GM23248 (cell line): ENCODE measurements at regions of chr1 and their contacts with region 1.

Region 1: DNA sequence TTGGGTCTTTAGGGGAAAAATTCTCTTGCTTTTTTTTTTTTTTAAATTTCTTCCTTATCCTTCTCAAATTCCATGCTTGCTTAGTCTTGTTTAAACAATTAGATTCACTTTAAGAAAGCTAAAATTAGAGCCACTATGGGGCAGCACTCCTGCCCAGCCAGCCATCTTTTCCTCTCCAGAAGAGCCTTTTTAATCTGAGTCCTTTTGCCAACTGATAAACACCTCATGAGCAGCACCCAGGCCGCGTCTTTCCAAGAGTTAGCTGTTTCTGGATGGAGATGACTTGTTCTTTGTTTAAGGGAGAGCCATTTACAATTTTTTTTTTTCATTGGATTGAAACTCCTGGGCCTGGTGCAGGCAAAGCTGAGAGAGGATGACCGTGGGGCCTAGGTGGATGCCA is 53.3 kb upstream of the TSPAN2 start:
- DNase-seq: no peak
- H3K4me3 ChIP-seq: no peak overlapping the region
- H3K27ac ChIP-seq: no peak overlapping the region
- H3K4me1 ChIP-seq: peaks cover 10% of the 10 kb centered on the region
- H3K27me3 ChIP-seq: no peaks in the 10 kb centered on the region

Region 2: DNA sequence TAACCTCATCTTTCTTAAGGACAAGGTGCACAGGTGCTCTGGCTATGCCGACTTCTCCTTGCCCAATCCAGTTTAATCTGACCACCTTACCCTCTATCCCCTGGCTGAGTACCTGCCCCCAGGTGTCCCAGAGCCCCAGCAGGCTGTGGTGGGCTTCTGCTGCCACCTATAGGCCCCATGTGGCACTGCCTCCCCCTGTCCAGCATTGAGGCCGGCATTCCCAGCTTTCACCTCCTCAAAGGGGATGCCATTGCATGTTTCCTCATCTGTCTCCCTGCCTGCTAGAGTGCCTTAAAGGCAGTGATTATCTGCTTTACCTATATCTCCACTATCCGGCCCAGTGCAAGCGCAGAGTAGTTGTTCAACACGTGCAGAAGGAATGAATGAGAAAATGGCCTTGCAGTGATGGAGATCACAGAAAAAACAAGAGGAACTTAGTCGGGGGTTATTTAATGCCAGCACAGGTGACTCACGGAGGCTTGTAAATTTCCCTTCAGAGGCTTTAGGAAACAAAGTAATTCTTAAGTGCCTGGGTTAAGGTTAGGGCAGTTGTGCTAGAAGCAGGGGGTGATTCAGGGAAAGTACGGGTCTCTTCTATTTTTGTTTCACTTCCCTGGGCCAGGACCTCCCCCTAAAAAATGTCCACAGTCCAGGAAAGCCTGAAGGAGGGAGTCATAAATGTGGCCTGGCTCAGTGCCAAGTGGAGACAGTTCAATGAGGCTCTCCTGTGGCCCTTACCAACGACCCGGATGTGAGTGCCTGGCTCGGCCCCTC is 327.3 kb after region 1 on chr1:
- in situ Hi-C with region 1: loop called (anchors 10 kb)
- DNase-seq: peak; percentile 65
- H3K4me3 ChIP-seq: no peak overlapping the region
- H3K27ac ChIP-seq: no peak overlapping the region
- H3K4me1 ChIP-seq: peaks cover 8% of the 10 kb centered on the region; the same call in 1 of the 2 replicates
- H3K27me3 ChIP-seq: no peaks in the 10 kb centered on the region

Region 3: DNA sequence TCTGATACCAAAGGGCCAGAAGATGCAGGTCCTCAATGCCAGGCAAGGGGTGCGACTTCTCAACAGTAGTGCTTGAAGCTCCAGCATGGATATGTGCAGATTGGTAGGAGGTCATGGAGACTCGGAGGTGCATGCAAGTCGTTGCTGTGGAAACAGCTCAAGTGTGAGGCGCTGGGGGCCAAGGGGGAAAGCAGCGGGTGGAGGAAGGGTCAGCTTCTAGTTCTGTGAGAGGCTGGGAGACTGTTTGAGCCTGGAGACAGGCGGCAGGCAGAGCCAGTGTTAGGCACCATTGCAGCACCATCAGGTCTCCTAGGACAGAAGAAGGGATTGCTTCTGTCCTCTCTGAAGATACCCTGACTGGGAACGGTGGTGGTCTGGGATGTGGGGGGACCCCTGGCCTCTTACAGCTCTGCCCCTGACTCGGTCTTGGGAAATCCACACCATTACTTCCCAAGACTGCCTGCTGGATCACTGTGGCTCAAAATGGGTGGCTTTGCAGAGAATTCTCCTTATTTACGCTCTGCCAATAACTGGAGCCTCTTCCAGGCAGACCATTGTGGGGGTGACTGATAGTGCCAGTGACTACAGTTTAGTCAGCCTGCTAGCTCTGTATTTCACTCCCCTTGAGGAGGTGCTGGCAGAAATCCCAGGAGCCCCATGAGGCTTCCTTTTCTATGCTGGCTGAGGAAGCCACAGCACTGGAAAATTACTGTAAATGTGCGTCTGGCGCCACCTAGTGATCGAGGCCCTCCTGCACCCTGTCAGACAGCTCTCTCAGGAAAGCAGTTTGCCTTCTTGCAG is 452.9 kb after region 1 on chr1:
- in situ Hi-C with region 1: loop called (anchors 10 kb)
- DNase-seq: peak; percentile 99
- H3K4me3 ChIP-seq: no peak overlapping the region
- H3K27ac ChIP-seq: peak overlapping the region; percentile 22; the same call in 1 of the 2 replicates
- H3K4me1 ChIP-seq: peaks cover 12% of the 10 kb centered on the region; the same call in 1 of the 2 replicates
- H3K27me3 ChIP-seq: no peaks in the 10 kb centered on the region